ENCODE measurements at regions of chr9 and their contacts with region 1.

Region 1: DNA sequence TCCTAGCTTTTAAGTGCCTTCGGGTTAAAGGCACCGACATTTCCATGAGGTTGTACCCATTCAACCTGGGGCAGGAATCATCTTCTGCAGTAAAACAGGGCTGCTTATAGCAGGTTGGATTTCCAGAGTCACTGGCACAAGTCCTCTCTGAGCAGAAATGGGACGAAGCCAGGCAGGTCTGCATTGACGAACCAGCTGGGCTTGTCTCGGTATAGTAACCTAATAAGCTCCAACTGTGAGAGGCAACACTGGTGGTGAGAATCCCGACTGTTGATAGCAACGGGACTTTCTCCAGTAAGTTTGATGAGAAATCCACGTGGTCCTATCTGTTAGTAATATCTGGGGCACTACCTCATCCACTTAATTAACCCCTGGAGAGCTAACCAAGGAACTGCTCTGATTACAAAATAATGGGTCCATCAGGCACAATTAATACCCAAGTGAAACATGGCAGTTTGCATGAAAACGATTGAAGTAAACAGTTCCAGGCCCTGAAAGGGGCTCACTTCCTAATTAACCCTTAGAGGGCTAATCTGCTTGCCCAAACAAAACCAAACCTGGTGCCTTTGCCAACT is 491.0 kb upstream of the C9orf72 start:
- DNase-seq: no peak
- ATAC-seq: no peak

Region 2: GRCh38 chr9:27732494-27732893 is 331.8 kb before region 1 on chr9:
- intact Hi-C with region 1: loop called (anchors 10 kb)
- DNase-seq: no peak
- ATAC-seq: no peak

Measured in left ventricle myocardium superior (tissue), 1 donor.